Activated CD8-positive, alpha-beta T cell treated with anti-CD3 and anti-CD28 coated beads for 36 hours (primary cell): ENCODE measurements at regions of chr3 and their contacts with region 1.

Region 1: DNA sequence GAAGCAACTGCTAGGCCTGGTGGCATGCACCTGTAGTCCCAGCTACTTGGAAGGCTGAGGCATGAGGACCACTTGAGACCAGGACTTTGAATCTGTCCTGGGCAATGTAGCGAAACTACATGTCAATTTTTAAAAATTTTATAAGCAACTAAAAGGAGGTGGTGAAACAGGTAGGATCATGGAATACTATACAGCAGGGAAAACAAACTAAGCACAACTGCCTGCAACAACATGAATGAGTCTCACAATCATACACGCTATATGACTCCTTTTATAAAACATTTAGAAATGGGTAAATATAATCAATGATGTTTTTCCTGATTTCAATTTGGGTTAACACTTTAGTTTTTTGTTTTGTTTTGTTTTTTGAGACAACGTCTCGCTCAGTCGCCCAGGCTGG is 29.5 kb upstream of the CNBP start:
- DNase-seq: no peak
- ATAC-seq: no peak
- H3K4me3 Mint-ChIP-seq: no peak overlapping the region
- H3K27ac Mint-ChIP-seq: no peak overlapping the region
- H3K4me1 Mint-ChIP-seq: no peaks in the 10 kb centered on the region
- H3K27me3 Mint-ChIP-seq: peaks cover 1% of the 10 kb centered on the region
- CTCF ChIP-seq: no peak

Region 2: DNA sequence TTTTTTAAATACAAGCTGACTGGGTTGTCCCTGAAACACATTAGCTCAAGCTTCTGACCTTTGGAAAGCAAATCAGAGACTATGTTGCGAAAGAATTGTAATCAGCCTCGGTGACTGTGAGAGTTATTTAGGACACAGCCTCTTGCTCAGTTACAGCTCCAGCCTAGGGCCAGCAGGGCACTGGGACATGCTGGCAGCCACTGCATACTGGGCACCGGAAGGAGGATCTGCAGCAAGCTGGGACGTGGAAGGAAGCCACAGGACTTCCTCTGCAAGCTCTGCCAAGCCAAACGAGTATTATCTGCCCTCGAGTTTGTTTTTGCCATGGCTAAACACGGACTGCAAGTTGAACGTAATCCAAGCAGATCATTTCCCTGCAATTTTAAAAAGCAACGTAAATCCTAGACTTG is 11.8 kb after region 1 on chr3:
- CTCF ChIA-PET with region 1: interaction called, 10 read pairs
- POLR2A ChIA-PET with region 1: no interaction called
- intact Hi-C with region 1: no loop called
- DNase-seq: peak; percentile 36
- ATAC-seq: peak; percentile 79
- H3K4me3 Mint-ChIP-seq: peak overlapping the region; percentile 30
- H3K27ac Mint-ChIP-seq: peak overlapping the region; percentile 80
- H3K4me1 Mint-ChIP-seq: peaks cover 8% of the 10 kb centered on the region
- H3K27me3 Mint-ChIP-seq: no peaks in the 10 kb centered on the region
- CTCF ChIP-seq: no peak